ENCODE measurements at regions of chr3 and their contacts with region 1.

Region 1: DNA sequence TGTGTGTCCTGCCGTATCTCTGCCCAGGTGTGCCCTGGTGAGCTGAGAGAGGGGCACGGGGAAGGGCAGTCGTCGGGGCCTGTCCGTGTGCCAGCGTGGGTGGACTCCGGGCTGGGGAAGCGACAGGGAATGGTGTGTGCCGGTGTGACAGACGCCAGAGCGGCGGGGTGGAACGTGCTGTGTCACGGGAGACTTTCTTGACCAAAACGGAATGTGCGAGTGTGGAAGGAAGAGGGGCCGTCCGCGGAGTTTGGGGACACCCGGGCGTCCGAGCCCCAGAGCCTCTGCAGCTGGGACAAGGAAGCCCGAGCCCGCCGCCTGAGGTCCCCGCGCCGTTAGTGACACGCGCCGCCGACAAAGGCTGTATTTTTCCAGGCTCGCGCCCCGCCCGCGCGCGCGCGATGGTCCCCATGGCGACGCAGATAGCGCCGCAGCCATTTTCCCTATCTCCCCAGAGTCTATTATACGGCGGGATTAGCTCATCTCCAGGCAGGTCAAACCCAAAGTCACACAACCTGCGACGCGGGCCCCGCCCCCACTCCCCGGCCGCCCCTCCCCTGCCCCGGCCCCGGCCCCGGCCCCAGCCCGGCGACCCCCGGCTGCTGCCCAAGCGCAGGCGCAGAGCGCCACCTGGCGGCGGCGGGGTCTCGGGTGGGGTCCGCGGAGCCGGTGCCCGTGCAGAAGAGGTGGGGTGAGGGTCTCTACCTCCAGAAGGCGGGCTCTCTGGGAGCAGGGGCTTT is 4.6 kb upstream of the GATA2 start:
- DNase-seq: peak; percentile 44 to 76 (median 74)
- H3K4me3 ChIP-seq: peak overlapping the region; percentile 42
- H3K27ac ChIP-seq: no peak overlapping the region
- H3K4me1 ChIP-seq: peaks cover 8% of the 10 kb centered on the region
- H3K27me3 ChIP-seq: no peaks in the 10 kb centered on the region
- CTCF ChIP-seq: peak; percentile 36 to 51 (median 43)
- EP300 ChIP-seq: no peak
- POLR2A ChIP-seq: no peak

Region 2: GRCh38 chr3:128075516-128076482 is 421.8 kb before region 1 on chr3:
- intact Hi-C with region 1: loop called (anchors 5 to 10 kb)
- DNase-seq: peak; percentile 81 to 95 (median 92)
- H3K4me3 ChIP-seq: peak overlapping the region; percentile 32
- H3K27ac ChIP-seq: no peak overlapping the region
- H3K4me1 ChIP-seq: peaks cover 6% of the 10 kb centered on the region
- H3K27me3 ChIP-seq: no peaks in the 10 kb centered on the region
- CTCF ChIP-seq: peak; percentile 90 to 99 (median 95)
- EP300 ChIP-seq: no peak
- POLR2A ChIP-seq: no peak

Region 3: DNA sequence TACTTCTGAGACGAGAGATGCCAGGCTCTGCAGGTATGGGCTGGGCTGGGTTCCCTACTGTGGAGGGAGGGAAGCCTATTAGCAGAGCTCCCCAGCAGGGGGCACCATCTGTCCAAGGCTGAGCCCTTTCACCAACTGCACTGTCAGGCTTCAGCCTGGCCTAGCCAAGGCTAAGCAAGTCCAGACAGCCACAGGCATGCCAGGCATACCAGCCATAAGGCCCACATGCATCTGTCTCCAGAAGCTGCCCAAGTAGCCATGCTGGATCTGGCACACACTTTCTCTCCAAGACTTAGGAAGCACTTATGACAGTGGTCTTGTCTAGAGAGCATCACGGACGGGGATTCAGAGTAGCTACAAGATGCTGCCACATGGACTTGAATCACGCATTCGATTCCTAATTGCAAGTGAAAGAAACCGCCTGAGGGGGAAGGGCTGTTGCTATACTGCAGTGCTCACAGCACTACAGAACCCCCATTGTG is 402.3 kb before region 1 on chr3:
- intact Hi-C with region 1: loop called in 1 of 4 experiments (anchors 5 kb)
- DNase-seq: peak; percentile 56 to 79 (median 72)
- H3K4me3 ChIP-seq: no peak overlapping the region
- H3K27ac ChIP-seq: no peak overlapping the region
- H3K4me1 ChIP-seq: no peaks in the 10 kb centered on the region
- H3K27me3 ChIP-seq: no peaks in the 10 kb centered on the region
- CTCF ChIP-seq: peak in 2 of 3 donors; percentile 36 to 59
- EP300 ChIP-seq: no peak
- POLR2A ChIP-seq: no peak

Region 4: DNA sequence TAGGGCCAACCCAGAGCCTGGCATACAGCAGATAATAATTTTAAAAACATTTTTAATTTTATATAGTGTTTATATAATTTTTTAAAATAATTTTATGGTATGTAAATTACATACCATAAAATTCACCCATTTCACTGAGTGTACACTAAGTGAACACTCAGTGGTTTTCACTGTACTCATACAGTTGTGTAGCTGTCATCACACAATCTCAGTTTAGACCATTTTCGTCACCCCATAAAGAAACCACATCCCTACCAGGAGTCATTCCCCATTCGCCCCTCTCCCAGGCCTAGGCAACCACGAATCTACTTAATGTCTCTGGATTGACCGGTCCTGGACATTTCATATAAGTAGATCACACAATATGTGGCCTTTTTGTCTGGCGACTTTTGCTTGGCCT is 334.1 kb before region 1 on chr3:
- intact Hi-C with region 1: loop called in 2 of 4 experiments (anchors 2 to 5 kb)
- DNase-seq: no peak
- H3K4me3 ChIP-seq: no peak overlapping the region
- H3K27ac ChIP-seq: no peak overlapping the region
- H3K4me1 ChIP-seq: no peaks in the 10 kb centered on the region
- H3K27me3 ChIP-seq: no peaks in the 10 kb centered on the region
- CTCF ChIP-seq: no peak
- EP300 ChIP-seq: no peak
- POLR2A ChIP-seq: no peak

Region 5: GRCh38 chr3:128170805-128171516 is 326.6 kb before region 1 on chr3:
- intact Hi-C with region 1: loop called in 3 of 4 experiments (anchors 2 to 5 kb)
- DNase-seq: peak; percentile 58 to 73 (median 67)
- H3K4me3 ChIP-seq: no peak overlapping the region
- H3K27ac ChIP-seq: no peak overlapping the region
- H3K4me1 ChIP-seq: peaks cover 2% of the 10 kb centered on the region
- H3K27me3 ChIP-seq: no peaks in the 10 kb centered on the region
- CTCF ChIP-seq: peak; percentile 42 to 86 (median 78)
- EP300 ChIP-seq: no peak
- POLR2A ChIP-seq: no peak

Region 6: DNA sequence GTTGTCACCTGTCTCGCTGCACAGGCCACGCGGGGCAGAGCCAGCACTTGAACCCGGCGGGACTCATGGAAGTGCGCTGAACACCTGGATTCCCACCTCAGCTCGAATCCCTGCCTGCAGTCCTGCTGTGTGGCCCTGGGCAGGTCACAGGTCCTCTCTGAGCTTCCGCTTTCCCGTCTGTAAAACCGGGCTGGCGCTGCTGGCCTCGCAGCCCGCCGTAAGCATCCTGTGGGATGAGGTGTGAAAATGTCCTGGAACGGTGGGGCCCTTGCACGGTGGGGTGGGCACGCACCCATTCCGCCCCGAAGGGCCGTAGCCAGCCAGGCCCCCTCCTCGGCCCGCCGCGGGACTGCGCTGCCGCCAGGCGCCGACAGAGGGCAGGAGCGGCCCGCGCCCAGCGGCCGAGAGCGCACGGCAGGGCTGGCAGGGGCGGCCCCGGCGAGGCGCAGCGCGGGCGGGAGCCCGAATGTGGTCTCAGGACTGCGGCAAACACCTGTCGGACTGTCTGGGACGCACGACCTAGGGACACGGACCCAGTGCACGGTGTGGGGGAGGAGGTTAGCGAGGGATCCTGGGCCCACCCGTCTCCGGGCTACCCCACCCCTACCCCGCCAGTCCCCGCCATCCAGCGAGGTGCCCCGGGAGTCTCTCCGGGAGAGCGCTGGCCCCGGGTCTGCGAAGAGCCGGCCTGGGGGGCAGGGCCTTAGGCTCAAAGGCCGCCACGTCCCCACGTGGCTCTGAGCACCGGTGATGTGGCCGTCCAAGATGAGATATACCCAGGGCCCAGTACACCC is 71.2 kb before region 1 on chr3:
- intact Hi-C with region 1: loop called (anchors 2 to 5 kb)
- DNase-seq: peak; percentile 33 to 69 (median 47)
- H3K4me3 ChIP-seq: no peak overlapping the region
- H3K27ac ChIP-seq: no peak overlapping the region
- H3K4me1 ChIP-seq: no peaks in the 10 kb centered on the region
- H3K27me3 ChIP-seq: no peaks in the 10 kb centered on the region
- CTCF ChIP-seq: peak; percentile 55 to 93 (median 90)
- EP300 ChIP-seq: no peak
- POLR2A ChIP-seq: no peak